Activated T-helper 2 cell treated with anti-CD3 and anti-CD28 coated beads, Interferon-gamma antibody, Interleukin-2, Interleukin-4, amounts not matched to agents 10 μg/mL and 5 μg/mL and 100 μg/mL, durations not matched to agents 14 hours and 24 hours and 36 hours (primary cell): ENCODE measurements at regions of chr12 and their contacts with region 1.

Region 1: DNA sequence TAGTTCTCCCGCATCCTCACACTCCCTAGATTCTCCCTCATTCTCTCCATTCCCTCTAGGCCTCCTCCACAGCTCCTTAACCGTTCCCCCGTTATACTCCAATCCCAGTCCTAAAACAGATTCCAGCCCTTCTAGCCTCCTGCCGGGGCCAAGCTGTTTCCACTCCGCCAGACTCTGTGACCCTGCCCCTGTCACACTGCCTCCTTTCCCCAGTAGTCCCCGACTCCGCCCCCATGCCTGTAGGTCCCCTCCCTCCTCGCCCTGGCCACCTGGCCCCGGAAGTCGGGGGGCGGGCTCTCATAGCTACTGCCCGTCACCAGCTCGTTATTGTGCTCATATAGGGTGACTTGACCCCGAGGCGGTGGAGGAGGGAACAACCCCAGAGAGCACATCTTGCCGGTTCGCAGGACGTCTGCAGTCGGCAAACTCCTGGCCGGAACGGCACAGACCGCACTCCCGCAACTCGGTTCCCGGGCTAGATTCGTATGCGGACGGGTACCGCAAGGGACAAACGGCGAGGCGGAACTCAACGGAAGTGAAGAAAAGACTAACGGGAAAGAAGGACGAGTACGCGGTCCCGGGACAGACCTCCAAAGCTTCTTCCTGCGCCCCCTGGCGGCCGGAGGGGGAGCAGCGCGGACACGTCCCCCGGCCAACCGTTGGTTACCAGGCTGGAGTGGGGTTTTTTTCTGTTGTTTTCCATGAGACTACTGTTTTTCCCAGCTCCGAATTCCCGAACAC is at the start of gene AAAS:
- DNase-seq: peak; percentile 96
- H3K4me3 Mint-ChIP-seq: peak within 1 kb of the TSS; percentile 99
- H3K27ac Mint-ChIP-seq: peak within 1 kb of the TSS; percentile 98
- H3K4me1 Mint-ChIP-seq: peaks cover 31% of the 10 kb centered on the region
- H3K27me3 Mint-ChIP-seq: no peaks in the 10 kb centered on the region
- total RNA-seq, gene AAAS: 83.7 and 85.4 TPM in 2 replicates

Region 2: DNA sequence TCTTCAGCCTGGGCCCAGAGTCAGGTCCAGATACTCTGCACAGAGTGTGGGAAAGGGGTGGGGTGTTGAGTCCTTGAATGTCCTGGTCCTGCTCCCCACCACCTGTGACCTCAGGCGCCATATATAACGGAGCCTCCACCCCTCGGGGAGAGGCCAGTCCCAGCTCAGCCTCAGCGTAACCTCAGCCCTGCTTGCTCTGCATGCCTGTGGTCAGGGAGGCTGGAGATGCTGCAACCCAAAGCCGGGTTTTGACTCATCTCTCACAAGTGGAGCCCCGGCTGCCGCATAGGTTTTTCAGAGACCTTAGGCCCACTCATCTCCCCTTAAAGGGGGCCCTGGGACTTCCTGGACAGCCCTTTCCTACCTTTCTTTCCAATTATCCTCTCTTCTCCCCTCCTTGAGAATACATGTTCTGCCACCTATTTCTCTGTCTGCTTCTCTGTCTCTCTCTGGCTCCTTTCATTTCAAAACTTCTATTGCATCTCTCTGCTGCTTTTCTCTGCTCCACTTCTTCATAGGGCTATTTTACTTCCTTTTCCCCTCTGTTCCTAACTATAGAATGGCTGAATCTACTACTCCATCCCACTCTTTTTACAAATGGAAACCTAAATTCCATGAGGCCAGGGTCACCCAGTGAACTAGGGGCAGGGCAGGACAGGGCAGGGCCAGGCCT is 115.4 kb before region 1 on chr12:
- intact Hi-C with region 1: loop called (anchors 2 kb)
- DNase-seq: peak; percentile 75
- H3K4me3 Mint-ChIP-seq: peak overlapping the region; percentile 82
- H3K27ac Mint-ChIP-seq: peak overlapping the region; percentile 66
- H3K4me1 Mint-ChIP-seq: peaks cover 56% of the 10 kb centered on the region
- H3K27me3 Mint-ChIP-seq: no peaks in the 10 kb centered on the region

Region 3: GRCh38 chr12:53267999-53268647 is 53.1 kb before region 1 on chr12 and contains the start of gene ESPL1:
- intact Hi-C with region 1: loop called (anchors 1 kb)
- DNase-seq: peak; percentile 79
- H3K4me3 Mint-ChIP-seq: peak within 1 kb of the TSS; percentile 92
- H3K27ac Mint-ChIP-seq: peak within 1 kb of the TSS; percentile 91
- H3K4me1 Mint-ChIP-seq: peaks cover 34% of the 10 kb centered on the region
- H3K27me3 Mint-ChIP-seq: no peaks in the 10 kb centered on the region
- total RNA-seq, gene ESPL1: 72.6 and 75.3 TPM in 2 replicates

Region 4: GRCh38 chr12:53344824-53345485 is 23.7 kb after region 1 on chr12:
- intact Hi-C with region 1: loop called (anchors 1 kb)
- DNase-seq: peak; percentile 47
- H3K4me3 Mint-ChIP-seq: peak overlapping the region; percentile 98
- H3K27ac Mint-ChIP-seq: peak overlapping the region; percentile 93
- H3K4me1 Mint-ChIP-seq: peaks cover 18% of the 10 kb centered on the region
- H3K27me3 Mint-ChIP-seq: peaks cover 7% of the 10 kb centered on the region

Region 5: DNA sequence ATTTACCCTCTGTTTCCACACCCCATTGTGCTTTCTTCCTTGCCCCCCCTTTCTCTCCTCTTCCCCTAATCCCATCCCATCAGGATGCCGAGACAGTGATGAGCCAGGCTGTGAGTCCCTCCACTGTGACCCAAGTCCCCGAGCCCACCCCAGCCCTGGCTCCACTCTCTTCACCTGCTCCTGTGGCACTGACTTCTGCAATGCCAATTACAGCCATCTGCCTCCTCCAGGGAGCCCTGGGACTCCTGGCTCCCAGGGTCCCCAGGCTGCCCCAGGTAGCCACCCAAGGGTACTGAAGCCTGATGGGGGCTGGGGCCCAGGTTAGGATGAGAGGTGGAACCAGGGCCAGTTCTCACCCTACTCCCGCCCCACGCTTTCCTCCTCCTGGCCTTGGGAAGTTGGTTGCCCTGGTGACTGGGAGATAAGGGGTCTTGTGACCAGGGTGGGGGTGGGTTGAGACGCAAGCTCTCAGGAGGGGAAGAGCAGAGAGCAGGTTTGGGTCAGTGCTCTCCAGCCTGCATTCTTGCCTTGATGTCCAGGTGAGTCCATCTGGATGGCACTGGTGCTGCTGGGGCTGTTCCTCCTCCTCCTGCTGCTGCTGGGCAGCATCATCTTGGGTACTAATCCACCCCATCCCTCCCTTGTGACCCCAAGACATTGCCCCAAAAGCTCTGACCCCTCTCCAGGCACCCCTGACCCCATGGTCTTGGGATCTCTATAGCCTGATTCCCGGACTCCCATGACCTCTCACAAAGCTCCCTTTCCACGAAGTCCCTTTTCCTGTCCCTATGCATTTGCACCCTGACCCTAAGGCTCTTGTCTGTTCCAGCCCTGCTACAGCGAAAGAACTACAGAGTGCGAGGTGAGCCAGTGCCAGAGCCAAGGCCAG is 103.6 kb after region 1 on chr12:
- intact Hi-C with region 1: loop called (anchors 1 kb)
- DNase-seq: no peak
- H3K4me3 Mint-ChIP-seq: no peak overlapping the region
- H3K27ac Mint-ChIP-seq: no peak overlapping the region
- H3K4me1 Mint-ChIP-seq: peaks cover 12% of the 10 kb centered on the region
- H3K27me3 Mint-ChIP-seq: no peaks in the 10 kb centered on the region

Region 6: GRCh38 chr12:53508534-53509199 is 187.4 kb after region 1 on chr12:
- intact Hi-C with region 1: loop called (anchors 2 kb)
- DNase-seq: peak; percentile 77
- H3K4me3 Mint-ChIP-seq: peak overlapping the region; percentile 8
- H3K27ac Mint-ChIP-seq: peak overlapping the region; percentile 58
- H3K4me1 Mint-ChIP-seq: peaks cover 6% of the 10 kb centered on the region
- H3K27me3 Mint-ChIP-seq: no peaks in the 10 kb centered on the region